ENCODE measurements at regions of chr11 and their contacts with region 1.

Region 1: GRCh38 chr11:114159802-114160632 is 100.5 kb downstream of the ZBTB16 start:
- DNase-seq: peak; percentile 79 to 100 (median 99)
- ATAC-seq: peak; percentile 97
- H3K4me3 ChIP-seq: peak overlapping the region; percentile 21
- H3K4me3 Mint-ChIP-seq: peak overlapping the region; percentile 53 to 85 (median 78)
- H3K27ac ChIP-seq: peak overlapping the region; percentile 62
- H3K27ac Mint-ChIP-seq: peak overlapping the region; percentile 88 to 98 (median 93)
- H3K4me1 ChIP-seq: peaks cover 23 to 70% of the 10 kb centered on the region in 2 donors
- H3K4me1 Mint-ChIP-seq: peaks cover 58 to 98% (median 90%) of the 10 kb centered on the region in 7 donors
- H3K27me3 ChIP-seq: no peaks in the 10 kb centered on the region
- H3K27me3 Mint-ChIP-seq: no peaks in the 10 kb centered on the region

Region 2: DNA sequence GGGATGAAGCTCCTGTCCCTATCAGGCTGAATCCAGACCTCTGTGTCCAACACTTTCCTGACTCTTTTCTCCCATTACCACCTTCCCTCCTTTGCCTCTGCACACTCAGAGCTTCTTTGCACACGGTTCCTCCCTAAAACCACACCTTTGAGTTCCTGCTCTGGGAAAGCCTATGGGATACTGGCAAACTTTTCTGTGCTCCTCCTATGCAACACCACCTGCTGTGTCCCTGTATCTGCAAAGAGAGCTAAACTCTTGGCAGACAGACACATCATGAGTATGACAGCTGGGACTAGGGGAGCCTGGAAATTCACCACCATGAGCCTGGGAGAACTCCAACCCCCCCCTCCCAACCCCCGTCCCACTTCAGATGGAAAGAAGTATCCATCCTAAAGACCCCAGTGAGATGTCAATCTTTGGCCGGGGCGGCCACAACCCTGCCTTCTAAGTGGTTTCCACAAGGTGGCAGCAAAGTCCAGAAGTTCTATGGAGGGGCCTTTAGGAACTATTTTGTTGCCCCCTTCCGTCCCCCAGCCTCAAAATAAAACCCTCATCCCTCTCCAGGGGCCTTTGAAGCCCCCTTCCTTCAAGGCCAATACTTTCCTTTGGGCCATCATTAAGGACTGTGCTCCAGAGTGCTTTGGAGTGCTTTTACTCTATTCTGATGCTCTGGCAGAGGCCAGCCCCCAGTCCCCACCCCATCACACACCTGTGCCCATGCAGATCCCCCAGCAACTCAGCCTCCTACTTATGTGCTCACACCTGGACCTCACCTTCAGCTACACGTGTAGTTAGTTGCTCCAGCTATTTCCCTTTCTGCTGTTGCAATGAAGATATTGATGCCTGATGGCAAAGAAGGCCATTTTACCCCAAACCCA is 165.7 kb before region 1 on chr11:
- CTCF ChIA-PET with region 1: no interaction called
- POLR2A ChIA-PET with region 1: interaction called, 3 read pairs
- intact Hi-C with region 1: loop called in 1 of 2 experiments (anchors 1 kb)
- DNase-seq: peak in 6 of 9 donors; percentile 12 to 50 (median 24)
- ATAC-seq: peak; percentile 57
- H3K4me3 ChIP-seq: no peak overlapping the region
- H3K4me3 Mint-ChIP-seq: no peak overlapping the region
- H3K27ac ChIP-seq: no peak overlapping the region
- H3K27ac Mint-ChIP-seq: no peak overlapping the region
- H3K4me1 ChIP-seq: no peaks in the 10 kb centered on the region
- H3K4me1 Mint-ChIP-seq: peaks cover 0 to 12% (median 5%) of the 10 kb centered on the region in 7 donors
- H3K27me3 ChIP-seq: no peaks in the 10 kb centered on the region
- H3K27me3 Mint-ChIP-seq: peaks cover 2 to 43% (median 29%) of the 10 kb centered on the region in 5 donors

Region 3: DNA sequence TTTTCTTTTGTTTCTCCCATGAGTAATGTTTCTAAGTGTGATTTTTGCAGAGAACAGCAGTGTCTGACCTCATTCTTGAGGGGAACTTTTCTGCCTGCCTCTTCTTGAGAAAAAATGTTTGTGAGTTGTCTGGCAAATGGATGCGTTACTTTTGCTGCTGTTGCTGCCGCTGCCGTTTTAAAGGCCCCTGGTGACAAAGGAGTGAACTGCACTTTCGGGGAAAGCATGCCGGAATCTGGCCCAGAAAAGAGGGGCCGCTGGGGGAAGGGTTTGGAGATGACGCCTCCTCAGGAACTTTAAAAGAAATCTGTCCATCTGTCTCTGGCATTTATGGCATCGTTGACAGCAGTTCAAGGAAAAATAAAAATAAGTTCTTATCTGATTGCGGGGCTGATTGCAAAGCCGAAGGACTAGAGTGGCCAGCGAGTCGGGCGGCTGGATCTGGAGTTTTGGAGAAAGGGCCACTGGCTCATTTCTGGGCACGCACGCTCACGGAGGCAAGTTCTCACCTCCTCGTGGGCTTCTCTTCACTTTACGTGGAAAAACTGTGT is 84.1 kb before region 1 on chr11:
- CTCF ChIA-PET with region 1: interaction called, 5 read pairs
- POLR2A ChIA-PET with region 1: no interaction called
- intact Hi-C with region 1: loop called in 1 of 2 experiments (anchors 1 kb)
- DNase-seq: peak in 6 of 9 donors; percentile 32 to 48 (median 36)
- ATAC-seq: peak; percentile 40
- H3K4me3 ChIP-seq: no peak overlapping the region
- H3K4me3 Mint-ChIP-seq: peak overlapping the region in 7 of 10 donors; percentile 20 to 57 (median 43)
- H3K27ac ChIP-seq: no peak overlapping the region
- H3K27ac Mint-ChIP-seq: peak overlapping the region in 3 of 9 donors; percentile 5 to 24 (median 20)
- H3K4me1 ChIP-seq: peaks cover 32 to 68% of the 10 kb centered on the region in 2 donors
- H3K4me1 Mint-ChIP-seq: peaks cover 29 to 79% (median 59%) of the 10 kb centered on the region in 7 donors
- H3K27me3 ChIP-seq: no peaks in the 10 kb centered on the region
- H3K27me3 Mint-ChIP-seq: peaks cover 0 to 44% (median 0%) of the 10 kb centered on the region in 5 donors

Region 4: GRCh38 chr11:114148013-114148382 is 12.0 kb before region 1 on chr11:
- CTCF ChIA-PET with region 1: no interaction called
- POLR2A ChIA-PET with region 1: interaction called, 5 read pairs
- intact Hi-C with region 1: loop called in 1 of 2 experiments (anchors 1 kb)
- DNase-seq: no peak
- ATAC-seq: peak; percentile 31
- H3K4me3 ChIP-seq: no peak overlapping the region
- H3K4me3 Mint-ChIP-seq: no peak overlapping the region
- H3K27ac ChIP-seq: no peak overlapping the region
- H3K27ac Mint-ChIP-seq: peak overlapping the region in 1 of 9 donors; percentile 11
- H3K4me1 ChIP-seq: peaks cover 0 to 15% of the 10 kb centered on the region in 2 donors
- H3K4me1 Mint-ChIP-seq: peaks cover 9 to 68% (median 32%) of the 10 kb centered on the region in 7 donors
- H3K27me3 ChIP-seq: no peaks in the 10 kb centered on the region
- H3K27me3 Mint-ChIP-seq: peaks cover 0 to 35% (median 0%) of the 10 kb centered on the region in 5 donors

Region 5: GRCh38 chr11:114197799-114198500 is 37.9 kb after region 1 on chr11:
- CTCF ChIA-PET with region 1: interaction called, 47 read pairs
- POLR2A ChIA-PET with region 1: interaction called, 363 read pairs
- intact Hi-C with region 1: loop called (anchors 1 to 5 kb)
- DNase-seq: no peak
- ATAC-seq: no peak
- H3K4me3 ChIP-seq: no peak overlapping the region
- H3K4me3 Mint-ChIP-seq: no peak overlapping the region
- H3K27ac ChIP-seq: no peak overlapping the region
- H3K27ac Mint-ChIP-seq: no peak overlapping the region
- H3K4me1 ChIP-seq: peaks cover 0 to 5% of the 10 kb centered on the region in 2 donors
- H3K4me1 Mint-ChIP-seq: peaks cover 6 to 30% (median 25%) of the 10 kb centered on the region in 7 donors
- H3K27me3 ChIP-seq: no peaks in the 10 kb centered on the region
- H3K27me3 Mint-ChIP-seq: no peaks in the 10 kb centered on the region

Region 6: GRCh38 chr11:114400217-114400914 is 240.3 kb after region 1 on chr11 and contains the starts of genes C11orf71 and RBM7:
- CTCF ChIA-PET with region 1: no interaction called
- POLR2A ChIA-PET with region 1: no interaction called
- intact Hi-C with region 1: loop called (anchors 5 kb)
- DNase-seq: peak; percentile 94 to 97 (median 95)
- ATAC-seq: peak; percentile 96
- H3K4me3 ChIP-seq: peak within 1 kb of the TSS; percentile 93
- H3K4me3 Mint-ChIP-seq: peak within 1 kb of the TSS; percentile 89 to 99 (median 97)
- H3K27ac ChIP-seq: peak within 1 kb of the TSS; percentile 96
- H3K27ac Mint-ChIP-seq: peak within 1 kb of the TSS; percentile 96 to 100 (median 99)
- H3K4me1 ChIP-seq: peaks cover 25% of the 10 kb centered on the region in 2 donors
- H3K4me1 Mint-ChIP-seq: peaks cover 33 to 77% (median 68%) of the 10 kb centered on the region in 7 donors
- H3K27me3 ChIP-seq: no peaks in the 10 kb centered on the region
- H3K27me3 Mint-ChIP-seq: no peaks in the 10 kb centered on the region
- total RNA-seq, gene C11orf71: 6.0 to 19.1 (median 17.1) TPM
- total RNA-seq, gene RBM7: 35.8 to 71.3 (median 43.4) TPM

Region 7: GRCh38 chr11:114719562-114719961 is 559.5 kb after region 1 on chr11:
- CTCF ChIA-PET with region 1: no interaction called
- POLR2A ChIA-PET with region 1: no interaction called
- intact Hi-C with region 1: no loop called
- DNase-seq: no peak
- ATAC-seq: no peak
- H3K4me3 ChIP-seq: no peak overlapping the region
- H3K4me3 Mint-ChIP-seq: no peak overlapping the region
- H3K27ac ChIP-seq: no peak overlapping the region
- H3K27ac Mint-ChIP-seq: no peak overlapping the region
- H3K4me1 ChIP-seq: no peaks in the 10 kb centered on the region
- H3K4me1 Mint-ChIP-seq: peaks cover 0 to 2% (median 0%) of the 10 kb centered on the region in 7 donors
- H3K27me3 ChIP-seq: no peaks in the 10 kb centered on the region
- H3K27me3 Mint-ChIP-seq: peaks cover 4 to 26% (median 15%) of the 10 kb centered on the region in 5 donors